GM12878 (cell line): ENCODE measurements at regions of chr15 and their contacts with region 1.

Region 1: DNA sequence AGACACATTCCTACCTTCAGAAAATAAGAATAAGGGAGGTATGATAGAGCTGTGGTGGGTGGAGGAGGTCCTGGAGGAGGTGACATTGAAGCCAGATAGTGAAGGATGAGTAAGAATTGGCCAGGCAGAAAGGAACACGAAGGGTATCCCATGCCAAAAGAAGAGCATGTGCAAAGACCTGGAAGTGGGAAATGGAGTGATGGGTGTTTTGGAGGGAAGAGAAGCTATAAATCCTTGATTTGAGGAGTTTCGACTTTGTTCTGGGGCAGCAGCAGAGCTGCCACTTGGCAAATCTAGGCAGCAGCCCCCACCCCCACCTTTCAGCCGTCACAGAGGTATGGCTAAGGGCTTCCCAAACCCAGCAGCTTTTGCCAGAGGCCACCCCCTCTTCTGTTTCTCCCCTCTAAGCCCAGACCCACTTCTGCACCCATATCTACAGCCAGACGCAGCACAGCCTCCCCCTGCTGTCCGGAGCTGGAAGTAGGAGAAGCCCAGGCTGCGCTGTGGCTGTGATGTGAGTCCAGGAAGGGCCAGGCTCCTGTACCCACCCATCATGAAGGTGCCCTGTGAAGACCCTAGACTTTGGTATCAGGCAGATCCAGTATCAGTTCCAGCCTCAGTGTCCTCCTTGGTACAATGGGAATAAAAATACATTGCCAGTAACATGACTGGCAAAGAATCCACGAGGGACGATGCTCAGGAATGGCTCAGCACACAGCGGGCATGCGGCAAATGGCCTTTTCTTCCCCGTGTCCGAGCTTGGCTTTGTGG is 188.7 kb upstream of the LINGO1 start:
- DNase-seq: no peak
- ATAC-seq: peak; percentile 91
- H3K4me3 ChIP-seq: no peak overlapping the region
- H3K27ac ChIP-seq: no peak overlapping the region
- H3K4me1 ChIP-seq: no peaks in the 10 kb centered on the region
- H3K27me3 ChIP-seq: peaks cover 12 to 13% of the 10 kb centered on the region in 2 experiments
- CTCF ChIP-seq: peak; percentile 70 to 82 (median 76)
- EP300 ChIP-seq: no peak
- POLR2A ChIP-seq: no peak
- RAD21 ChIP-seq: peak; percentile 80

Region 2: DNA sequence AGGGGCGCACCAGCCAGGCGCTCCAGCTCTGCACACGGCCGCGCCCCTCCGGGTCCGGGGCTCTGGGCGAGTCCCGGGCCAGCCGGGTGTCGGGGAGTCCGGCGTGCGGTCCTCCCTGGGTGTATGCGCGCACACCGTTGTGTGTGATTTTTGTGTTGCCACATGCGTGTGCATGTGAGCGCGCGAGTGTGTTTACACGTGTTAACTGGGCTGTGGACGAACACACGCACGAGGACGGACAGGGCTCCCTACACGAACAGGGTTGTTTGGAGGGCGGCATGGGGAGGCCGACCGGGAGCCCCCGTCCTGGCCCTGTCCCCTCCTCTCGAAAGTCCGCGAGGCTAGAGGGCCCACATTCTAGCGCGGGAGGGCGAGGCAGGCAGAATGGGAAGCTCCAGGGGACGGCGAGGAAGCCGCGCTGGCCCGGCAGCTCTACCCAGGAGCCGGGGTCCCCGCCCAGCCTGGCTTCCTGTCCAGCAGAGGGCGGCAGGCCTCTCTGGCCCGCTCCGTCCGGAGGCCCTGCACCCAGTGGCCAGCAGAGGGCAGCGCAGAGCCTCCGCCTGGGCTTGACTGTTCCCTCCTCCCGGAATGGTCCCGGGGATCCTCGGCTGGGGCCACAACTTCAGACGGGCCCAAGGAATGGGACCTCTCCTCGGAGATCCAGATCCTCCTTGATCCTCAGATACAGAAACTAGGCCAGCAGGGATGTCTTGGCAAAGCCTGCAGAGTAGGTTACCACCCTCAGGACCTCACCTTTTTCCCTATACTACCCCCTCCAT is 188.1 kb before region 1 on chr15:
- CTCF ChIA-PET with region 1: interaction called, 48 read pairs
- POLR2A ChIA-PET with region 1: no interaction called
- RAD21 ChIA-PET with region 1: interaction called, 19 read pairs
- SMC1A ChIA-PET with region 1: interaction called, 6 read pairs
- in situ Hi-C with region 1: loop called (anchors 25 kb)
- intact Hi-C with region 1: loop called (anchors 1 kb)
- DNase-seq: no peak
- ATAC-seq: peak; percentile 98
- H3K4me3 ChIP-seq: peak overlapping the region; percentile 29; the same call in 1 of the 2 replicates
- H3K27ac ChIP-seq: no peak overlapping the region
- H3K4me1 ChIP-seq: no peaks in the 10 kb centered on the region; the same call in 1 of the 2 replicates
- H3K27me3 ChIP-seq: peaks cover 16 to 18% of the 10 kb centered on the region in 2 experiments
- CTCF ChIP-seq: peak; percentile 99 to 100 (median 100); a peak in 5 of 6 replicates
- EP300 ChIP-seq: no peak
- POLR2A ChIP-seq: no peak
- RAD21 ChIP-seq: peak; percentile 63

Region 3: DNA sequence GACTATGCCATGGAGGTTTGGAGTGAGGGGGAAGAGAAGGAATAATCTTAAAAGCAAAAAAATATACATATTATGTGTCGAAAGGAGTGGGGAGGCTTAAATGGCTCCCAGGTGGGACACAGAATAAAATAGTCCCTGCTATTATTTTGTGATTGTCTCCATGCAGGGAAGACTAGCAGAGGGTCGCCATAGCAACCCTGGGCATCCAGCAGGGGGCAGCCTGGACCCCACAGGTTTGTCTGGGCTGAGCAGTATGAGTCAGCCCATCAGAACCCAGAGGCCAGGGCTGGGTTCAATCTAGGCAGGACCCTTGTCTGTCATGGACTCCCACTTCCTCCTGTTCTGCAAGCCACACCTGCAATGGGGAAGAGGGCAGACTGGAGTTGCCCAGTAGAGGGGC is 171.1 kb before region 1 on chr15:
- CTCF ChIA-PET with region 1: interaction called, 16 read pairs
- POLR2A ChIA-PET with region 1: no interaction called
- RAD21 ChIA-PET with region 1: interaction called, 4 read pairs
- SMC1A ChIA-PET with region 1: no interaction called
- in situ Hi-C with region 1: loop called (anchors 25 kb)
- intact Hi-C with region 1: no loop called
- DNase-seq: no peak
- ATAC-seq: peak; percentile 53
- H3K4me3 ChIP-seq: no peak overlapping the region
- H3K27ac ChIP-seq: no peak overlapping the region
- H3K4me1 ChIP-seq: no peaks in the 10 kb centered on the region
- H3K27me3 ChIP-seq: peaks cover 0 to 2% of the 10 kb centered on the region in 2 experiments; a peak in 2 of 4 replicates
- CTCF ChIP-seq: peak in 2 of 3 experiments; percentile 19 to 27; a peak in 2 of 6 replicates
- EP300 ChIP-seq: no peak
- POLR2A ChIP-seq: no peak
- RAD21 ChIP-seq: 0 out of 2 replicates have a peak, but pooled peaks have one; percentile 3

Region 4: DNA sequence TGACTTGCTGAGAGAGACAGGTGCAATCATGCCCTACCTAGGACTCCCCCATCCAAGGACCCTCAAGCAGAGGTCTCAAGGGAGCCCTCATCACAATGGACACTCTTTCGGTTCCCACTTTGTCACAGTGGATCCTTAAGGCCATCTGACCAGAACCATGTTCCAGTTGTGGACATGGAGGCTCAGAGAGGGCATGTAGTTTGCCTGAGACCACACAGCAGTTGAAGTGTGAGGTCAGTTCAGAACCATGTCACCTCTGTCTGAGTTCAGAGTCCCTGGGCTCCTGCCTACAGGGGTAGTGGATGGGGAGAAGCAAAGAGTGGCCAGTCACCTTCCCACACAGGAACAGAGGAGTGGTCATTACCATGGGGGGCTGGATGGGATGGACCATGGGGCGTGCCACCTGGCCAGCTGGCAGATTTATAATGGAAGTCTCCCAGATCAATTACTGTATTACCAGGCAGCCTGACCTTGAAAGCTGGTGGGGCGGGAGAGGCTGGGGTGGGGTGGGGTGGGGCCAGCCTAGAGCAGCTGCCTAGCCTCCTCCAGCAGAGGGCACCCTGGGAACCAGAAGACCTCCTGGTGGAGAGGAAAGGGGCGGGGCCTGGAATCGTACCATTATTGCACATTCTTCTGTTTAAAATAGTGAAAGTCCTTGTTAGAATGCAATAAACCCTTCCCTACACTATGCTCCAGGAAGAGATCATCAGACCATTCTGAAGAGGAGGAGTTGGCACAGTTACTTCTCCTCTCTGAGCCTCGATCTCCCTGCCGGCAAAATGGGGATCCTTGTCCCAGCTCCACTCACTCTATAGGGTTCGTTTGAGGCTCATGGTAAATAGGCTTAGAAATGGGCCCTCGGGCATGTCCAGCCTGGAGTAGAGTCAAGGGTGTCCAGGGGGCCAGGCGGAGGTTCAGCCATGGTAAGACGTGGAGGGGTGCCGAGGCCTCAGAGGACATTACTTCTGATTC is 161.7 kb before region 1 on chr15:
- CTCF ChIA-PET with region 1: interaction called, 14 read pairs
- POLR2A ChIA-PET with region 1: no interaction called
- RAD21 ChIA-PET with region 1: interaction called, 7 read pairs
- SMC1A ChIA-PET with region 1: interaction called, 10 read pairs
- in situ Hi-C with region 1: no loop called
- intact Hi-C with region 1: loop called (anchors 1 kb)
- DNase-seq: no peak
- ATAC-seq: peak; percentile 93
- H3K4me3 ChIP-seq: no peak overlapping the region
- H3K27ac ChIP-seq: no peak overlapping the region
- H3K4me1 ChIP-seq: no peaks in the 10 kb centered on the region
- H3K27me3 ChIP-seq: peaks cover 2 to 3% of the 10 kb centered on the region in 2 experiments; a peak in 2 of 4 replicates
- CTCF ChIP-seq: peak; percentile 32 to 59 (median 50); a peak in 4 of 6 replicates
- EP300 ChIP-seq: no peak
- POLR2A ChIP-seq: no peak
- RAD21 ChIP-seq: peak; percentile 30; the same call in 1 of the 2 replicates

Region 5: DNA sequence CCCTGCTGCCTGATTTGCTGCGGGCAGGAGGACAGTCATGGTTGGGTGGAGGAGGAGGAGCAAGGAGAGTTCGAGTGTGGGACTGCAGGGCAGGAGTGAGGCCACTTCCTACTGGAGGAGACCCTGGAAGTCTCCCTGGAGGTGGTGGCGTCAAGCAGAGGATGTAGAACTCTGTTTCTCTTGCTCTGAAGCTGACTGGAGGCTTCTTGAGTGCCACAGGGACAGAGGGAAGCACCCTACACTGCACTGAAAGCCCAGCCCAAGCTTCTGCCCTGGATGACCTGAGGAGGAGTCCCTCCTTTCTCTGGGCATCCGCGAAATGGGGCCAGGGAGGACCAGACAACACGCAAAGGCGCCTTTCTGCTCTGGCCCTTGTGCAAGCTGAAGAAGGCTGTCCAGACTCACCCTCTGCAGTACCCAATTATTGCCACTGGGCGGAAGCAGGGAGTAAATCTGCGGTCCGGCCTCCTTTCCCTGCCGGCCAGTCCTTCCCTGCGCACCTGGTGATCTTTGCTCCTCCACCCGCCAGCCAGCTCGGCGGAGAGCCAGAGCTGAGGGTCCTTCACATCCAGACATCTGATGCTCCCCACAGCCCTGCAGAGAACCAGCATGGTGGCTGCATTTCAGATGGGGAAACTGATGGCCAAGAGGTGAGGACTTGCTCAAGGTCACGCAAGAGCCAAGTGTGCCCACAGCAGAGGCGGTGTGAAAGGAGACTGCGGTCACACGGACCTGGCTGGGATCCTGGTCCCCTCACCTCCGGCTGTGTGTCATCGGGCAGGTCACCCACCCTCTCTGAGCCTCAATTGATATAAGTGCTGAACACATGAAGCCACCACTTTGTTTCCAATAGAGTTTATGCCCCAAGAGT is 49.1 kb after region 1 on chr15:
- CTCF ChIA-PET with region 1: interaction called, 19 read pairs
- POLR2A ChIA-PET with region 1: no interaction called
- RAD21 ChIA-PET with region 1: no interaction called
- SMC1A ChIA-PET with region 1: no interaction called
- in situ Hi-C with region 1: no loop called
- intact Hi-C with region 1: no loop called
- DNase-seq: no peak
- ATAC-seq: peak; percentile 88
- H3K4me3 ChIP-seq: no peak overlapping the region
- H3K27ac ChIP-seq: no peak overlapping the region
- H3K4me1 ChIP-seq: no peaks in the 10 kb centered on the region
- H3K27me3 ChIP-seq: no peaks in the 10 kb centered on the region; a peak in 1 of 4 replicates
- CTCF ChIP-seq: peak; percentile 76 to 86 (median 78)
- EP300 ChIP-seq: no peak
- POLR2A ChIP-seq: no peak
- RAD21 ChIP-seq: peak; percentile 47